ENCODE measurements at regions of chr22 and their contacts with region 1.

Region 1: GRCh38 chr22:41603873-41604332 is 14.3 kb upstream of the PMM1 start:
- DNase-seq: no peak
- ATAC-seq: no peak
- H3K4me3 ChIP-seq: no peak overlapping the region
- H3K27ac ChIP-seq: no peak overlapping the region
- H3K4me1 ChIP-seq: no peaks in the 10 kb centered on the region
- H3K27me3 ChIP-seq: no peaks in the 10 kb centered on the region
- CTCF ChIP-seq: no peak

Region 2: DNA sequence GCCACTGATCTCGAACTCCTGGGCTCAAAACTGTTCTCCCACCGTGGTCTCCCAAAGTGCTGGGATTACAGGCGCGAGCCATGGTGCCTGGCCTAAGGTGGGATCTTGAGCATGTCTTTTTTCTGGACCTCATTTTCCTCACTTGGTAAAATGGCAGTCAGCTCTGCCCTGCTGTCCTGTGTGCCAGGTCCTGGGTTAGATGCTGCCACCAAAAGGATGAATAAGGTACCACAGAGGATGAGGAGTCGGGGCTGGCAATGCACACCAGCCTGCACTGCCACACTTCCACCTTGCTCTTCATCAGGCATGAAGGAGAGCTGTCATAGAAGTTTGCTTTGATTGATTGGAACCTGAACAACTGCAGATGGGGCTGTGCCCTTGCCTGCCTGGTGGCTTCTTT is 102.7 kb before region 1 on chr22:
- intact Hi-C with region 1: no loop called
- DNase-seq: no peak
- ATAC-seq: peak in 3 of 4 donors; percentile 66 to 74 (median 73)
- H3K4me3 ChIP-seq: no peak overlapping the region
- H3K27ac ChIP-seq: no peak overlapping the region
- H3K4me1 ChIP-seq: no peaks in the 10 kb centered on the region
- H3K27me3 ChIP-seq: no peaks in the 10 kb centered on the region
- CTCF ChIP-seq: no peak

Region 3: DNA sequence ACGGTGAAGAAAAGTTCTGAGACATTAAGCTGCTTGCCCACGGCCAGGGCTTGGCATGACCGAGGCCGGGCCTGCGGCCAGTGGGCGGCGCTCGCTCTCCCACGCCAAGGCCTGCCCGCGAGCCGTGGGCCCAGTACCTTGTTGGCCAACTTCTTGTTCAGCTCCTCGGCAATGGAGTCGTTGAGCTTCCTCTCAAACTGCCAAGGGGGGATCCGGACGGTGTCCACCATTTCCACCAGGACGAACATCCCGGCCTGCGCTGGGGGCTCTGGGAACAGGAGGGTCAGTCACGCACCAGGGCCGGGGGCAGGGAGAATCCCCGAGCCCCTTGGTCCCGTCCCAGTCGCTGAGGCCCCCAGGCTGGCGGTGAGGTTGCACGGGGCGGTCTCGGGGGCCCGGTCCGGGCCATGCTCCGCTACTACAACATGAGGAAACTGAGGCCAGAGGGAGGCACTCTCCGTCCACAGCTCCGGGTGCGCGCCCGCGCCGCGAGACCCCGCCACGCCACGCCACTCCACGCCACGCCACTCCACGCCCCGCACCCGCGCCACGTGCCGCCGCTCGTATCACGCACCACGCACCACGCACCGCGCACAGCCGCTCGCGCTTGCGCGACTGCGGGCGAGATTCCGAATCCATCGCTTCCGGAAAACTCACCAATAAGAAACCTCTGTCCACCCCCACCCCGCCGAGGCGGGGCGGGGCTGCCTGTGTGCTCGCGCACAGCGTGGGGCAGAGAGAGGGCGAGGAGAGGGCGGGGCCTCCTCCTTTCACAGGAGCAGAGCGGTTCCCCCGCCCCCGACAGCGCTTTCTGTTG is 59.8 kb before region 1 on chr22 and contains the start of gene POLR3H:
- intact Hi-C with region 1: loop called in 2 of 3 experiments (anchors 5 to 10 kb)
- DNase-seq: peak; percentile 96 to 99 (median 98)
- ATAC-seq: peak; percentile 97 to 99 (median 97)
- H3K4me3 ChIP-seq: peak within 1 kb of the TSS; percentile 63 to 79 (median 70)
- H3K27ac ChIP-seq: peak within 1 kb of the TSS; percentile 46 to 85 (median 76)
- H3K4me1 ChIP-seq: peaks cover 12 to 16% (median 15%) of the 10 kb centered on the region in 3 donors
- H3K27me3 ChIP-seq: no peaks in the 10 kb centered on the region
- CTCF ChIP-seq: peak; percentile 15 to 39 (median 28)
- total RNA-seq, gene POLR3H: 11.0 to 18.9 (median 13.9) TPM